HCT116 (cell line): ENCODE measurements at regions of chr14 and their contacts with region 1.

Region 1: GRCh38 chr14:73058224-73058921 is at the start of gene RBM25:
- DNase-seq: peak; percentile 99
- ATAC-seq: peak; percentile 93
- H3K4me3 ChIP-seq: peak within 1 kb of the TSS; percentile 80 to 98
- H3K27ac ChIP-seq: peak within 1 kb of the TSS; percentile 84
- H3K4me1 ChIP-seq: peaks cover 7 to 17% of the 10 kb centered on the region in 2 experiments
- H3K27me3 ChIP-seq: no peaks in the 10 kb centered on the region
- CTCF ChIP-seq: no peak
- POLR2A ChIP-seq: peak; percentile 89
- RAD21 ChIP-seq: no peak
- total RNA-seq, gene RBM25: 80.1 TPM

Region 2: DNA sequence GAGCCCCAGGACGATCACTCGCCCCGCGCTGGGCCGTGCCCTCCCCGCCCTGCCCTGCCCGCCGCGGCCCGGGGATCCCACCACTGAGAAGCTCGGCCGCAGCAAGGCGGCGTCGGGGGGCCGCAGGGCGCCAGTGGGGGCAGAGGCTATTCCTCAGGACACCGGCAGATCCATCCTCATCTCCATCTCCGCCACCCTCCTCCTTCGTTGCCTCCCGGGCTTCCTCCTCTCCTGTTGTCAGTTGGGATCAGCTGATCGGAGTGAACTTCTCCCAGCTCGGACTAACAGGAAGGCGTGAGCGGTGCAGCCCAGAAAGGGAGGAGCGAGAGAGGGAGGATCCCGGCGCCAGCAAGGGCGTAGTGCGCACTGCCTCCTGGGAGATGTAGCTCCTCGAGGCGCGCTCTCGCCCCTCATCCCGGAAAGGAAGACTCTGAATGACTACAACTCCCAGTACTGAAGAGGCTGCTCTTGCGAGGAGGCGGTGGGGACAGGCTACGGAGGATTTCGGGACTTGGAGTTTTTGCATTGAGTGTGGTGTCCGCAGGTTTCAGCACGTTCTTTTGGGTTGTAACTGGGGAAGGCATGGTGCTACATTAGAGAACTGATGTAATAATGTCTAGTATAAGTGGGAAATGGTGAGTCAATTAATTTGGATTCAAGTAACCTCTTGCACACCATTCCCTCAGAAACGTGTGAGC is 31.4 kb before region 1 on chr14 and contains the start of gene ZFYVE1:
- CTCF ChIA-PET with region 1: no interaction called
- POLR2A ChIA-PET with region 1: interaction called, 11 read pairs
- RAD21 ChIA-PET with region 1: no interaction called
- intact Hi-C with region 1: no loop called
- DNase-seq: peak; percentile 95
- ATAC-seq: peak; percentile 99
- H3K4me3 ChIP-seq: peak within 1 kb of the TSS; percentile 67 to 84
- H3K27ac ChIP-seq: peak within 1 kb of the TSS; percentile 28; the same call in 1 of the 2 replicates
- H3K4me1 ChIP-seq: peaks cover 3 to 22% of the 10 kb centered on the region in 2 experiments; a peak in 3 of 4 replicates
- H3K27me3 ChIP-seq: no peaks in the 10 kb centered on the region
- CTCF ChIP-seq: no peak
- POLR2A ChIP-seq: no peak
- RAD21 ChIP-seq: no peak
- total RNA-seq, gene ZFYVE1: 7.7 TPM

Region 3: DNA sequence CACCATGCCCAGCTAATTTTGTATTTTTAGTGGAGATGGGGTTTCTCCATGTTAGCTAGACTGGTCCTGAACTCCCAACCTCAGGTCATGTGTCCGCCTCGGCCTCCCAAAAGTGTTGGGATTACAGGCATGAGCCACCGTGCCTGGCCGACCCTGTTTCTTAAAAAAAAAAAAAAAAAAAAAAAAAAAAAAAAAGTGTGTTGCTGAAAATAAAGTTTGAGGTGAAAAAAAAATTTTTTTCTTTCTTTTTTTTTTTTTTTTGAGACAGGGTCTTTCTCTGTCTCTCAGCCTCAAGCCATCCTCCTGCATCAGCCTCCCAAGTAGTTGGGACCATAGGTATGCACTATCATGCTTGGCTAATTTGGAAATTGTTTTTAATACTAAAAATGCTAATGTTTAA is 11.2 kb after region 1 on chr14:
- CTCF ChIA-PET with region 1: no interaction called
- POLR2A ChIA-PET with region 1: interaction called, 11 read pairs
- RAD21 ChIA-PET with region 1: no interaction called
- intact Hi-C with region 1: no loop called
- DNase-seq: no peak
- ATAC-seq: no peak
- H3K4me3 ChIP-seq: no peak overlapping the region
- H3K27ac ChIP-seq: no peak overlapping the region
- H3K4me1 ChIP-seq: no peaks in the 10 kb centered on the region
- H3K27me3 ChIP-seq: no peaks in the 10 kb centered on the region
- CTCF ChIP-seq: no peak
- POLR2A ChIP-seq: no peak
- RAD21 ChIP-seq: no peak